Adrenal gland (tissue), 19 donors: ENCODE measurements at regions of chr20 and their contacts with region 1.

Region 1: GRCh38 chr20:58980700-58981627 is at the start of gene NELFCD:
- DNase-seq: peak; percentile 78 to 91 (median 86)
- H3K4me3 ChIP-seq: peak within 1 kb of the TSS; percentile 36 to 99 (median 67)
- H3K27ac ChIP-seq: peak within 1 kb of the TSS in 3 of 5 donors; percentile 53 to 92 (median 58)
- H3K4me1 ChIP-seq: peaks cover 4 to 21% of the 10 kb centered on the region in 2 donors
- H3K27me3 ChIP-seq: no peaks in the 10 kb centered on the region
- CTCF ChIP-seq: no peak
- POLR2A ChIP-seq: peak; percentile 31 to 57
- total RNA-seq, gene NELFCD: 47.1 to 82.8 (median 67.3) TPM

Region 2: GRCh38 chr20:58746620-58747019 is 234.3 kb before region 1 on chr20:
- intact Hi-C with region 1: no loop called
- DNase-seq: no peak
- H3K4me3 ChIP-seq: no peak overlapping the region
- H3K27ac ChIP-seq: no peak overlapping the region
- H3K4me1 ChIP-seq: no peaks in the 10 kb centered on the region
- H3K27me3 ChIP-seq: no peaks in the 10 kb centered on the region
- CTCF ChIP-seq: no peak
- POLR2A ChIP-seq: no peak

Region 3: GRCh38 chr20:58895449-58896180 is 85.3 kb before region 1 on chr20:
- intact Hi-C with region 1: loop called in 1 of 2 experiments (anchors 5 kb)
- DNase-seq: peak in 1 of 7 donors; percentile 29
- H3K4me3 ChIP-seq: peak overlapping the region in 1 of 4 donors; percentile 78
- H3K27ac ChIP-seq: peak overlapping the region in 3 of 5 donors; percentile 8 to 99 (median 36)
- H3K4me1 ChIP-seq: peaks cover 46 to 62% of the 10 kb centered on the region in 2 donors
- H3K27me3 ChIP-seq: no peaks in the 10 kb centered on the region
- CTCF ChIP-seq: no peak
- POLR2A ChIP-seq: no peak

Region 4: GRCh38 chr20:59032023-59032712 is 51.2 kb after region 1 on chr20 and contains the start of gene ATP5F1E:
- intact Hi-C with region 1: loop called in 1 of 2 experiments (anchors 10 kb)
- DNase-seq: peak; percentile 94 to 98 (median 96)
- H3K4me3 ChIP-seq: peak within 1 kb of the TSS in 3 of 4 donors; percentile 34 to 83 (median 60)
- H3K27ac ChIP-seq: peak within 1 kb of the TSS; percentile 43 to 96 (median 85)
- H3K4me1 ChIP-seq: peaks cover 22 to 47% of the 10 kb centered on the region in 2 donors
- H3K27me3 ChIP-seq: no peaks in the 10 kb centered on the region
- CTCF ChIP-seq: no peak
- POLR2A ChIP-seq: peak; percentile 71 to 74
- total RNA-seq, gene ATP5F1E: 13.3 to 96.9 (median 60.6) TPM